Endothelial cell of umbilical vein (primary cell): ENCODE measurements at regions of chr21 and their contacts with region 1.

Region 1: GRCh38 chr21:17585875-17586450 is 26.7 kb downstream of the BTG3 start:
- DNase-seq: peak; percentile 56
- H3K4me3 ChIP-seq: no peak overlapping the region
- H3K27ac ChIP-seq: no peak overlapping the region
- H3K4me1 ChIP-seq: no peaks in the 10 kb centered on the region
- H3K27me3 ChIP-seq: peaks cover 0 to 2% of the 10 kb centered on the region in 2 experiments
- CTCF ChIP-seq: peak; percentile 37 to 51
- POLR2A ChIP-seq: no peak

Region 2: GRCh38 chr21:17554679-17555465 is 31.1 kb before region 1 on chr21:
- CTCF ChIA-PET with region 1: interaction called, 43 read pairs
- POLR2A ChIA-PET with region 1: no interaction called
- dilution Hi-C with region 1: no loop called
- intact Hi-C with region 1: no loop called
- DNase-seq: peak; percentile 25
- H3K4me3 ChIP-seq: no peak overlapping the region
- H3K27ac ChIP-seq: no peak overlapping the region
- H3K4me1 ChIP-seq: no peaks in the 10 kb centered on the region
- H3K27me3 ChIP-seq: no peaks in the 10 kb centered on the region
- CTCF ChIP-seq: peak; percentile 23 to 30
- POLR2A ChIP-seq: no peak

Region 3: DNA sequence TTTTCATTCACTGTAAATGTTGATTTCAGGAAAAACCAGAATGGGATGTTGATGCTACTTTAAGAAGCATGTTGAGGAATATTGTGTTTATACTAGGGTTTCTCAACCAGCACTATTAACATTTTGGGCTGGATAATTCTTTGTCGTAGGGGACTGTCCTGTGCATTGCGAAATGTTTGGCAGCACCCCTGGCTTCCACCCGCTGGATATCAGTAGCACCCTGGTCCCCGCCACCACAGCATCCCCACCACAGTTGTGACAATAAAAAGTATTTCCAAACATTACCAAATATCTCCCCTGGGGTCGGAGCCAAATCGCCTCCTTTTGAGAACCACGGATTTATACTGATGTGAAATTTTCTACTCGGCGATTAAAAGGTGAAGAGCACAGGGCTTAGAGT is 15.2 kb before region 1 on chr21:
- CTCF ChIA-PET with region 1: interaction called, 11 read pairs
- POLR2A ChIA-PET with region 1: no interaction called
- dilution Hi-C with region 1: no loop called
- intact Hi-C with region 1: no loop called
- DNase-seq: no peak
- H3K4me3 ChIP-seq: no peak overlapping the region
- H3K27ac ChIP-seq: no peak overlapping the region
- H3K4me1 ChIP-seq: no peaks in the 10 kb centered on the region
- H3K27me3 ChIP-seq: peaks cover 0 to 3% of the 10 kb centered on the region in 2 experiments
- CTCF ChIP-seq: no peak
- POLR2A ChIP-seq: no peak